Naive thymus-derived CD4-positive, alpha-beta T cell (primary cell): ENCODE measurements at regions of chr15 and their contacts with region 1.

Region 1: GRCh38 chr15:90221246-90221900 is 12.4 kb downstream of the CIB1 start:
- DNase-seq: no peak
- ATAC-seq: peak; percentile 37
- H3K4me3 ChIP-seq: no peak overlapping the region
- H3K4me3 Mint-ChIP-seq: no peak overlapping the region
- H3K27ac ChIP-seq: no peak overlapping the region
- H3K27ac Mint-ChIP-seq: no peak overlapping the region
- H3K4me1 ChIP-seq: no peaks in the 10 kb centered on the region
- H3K4me1 Mint-ChIP-seq: peaks cover 7 to 19% (median 10%) of the 10 kb centered on the region in 7 donors
- H3K27me3 ChIP-seq: no peaks in the 10 kb centered on the region
- H3K27me3 Mint-ChIP-seq: no peaks in the 10 kb centered on the region

Region 2: DNA sequence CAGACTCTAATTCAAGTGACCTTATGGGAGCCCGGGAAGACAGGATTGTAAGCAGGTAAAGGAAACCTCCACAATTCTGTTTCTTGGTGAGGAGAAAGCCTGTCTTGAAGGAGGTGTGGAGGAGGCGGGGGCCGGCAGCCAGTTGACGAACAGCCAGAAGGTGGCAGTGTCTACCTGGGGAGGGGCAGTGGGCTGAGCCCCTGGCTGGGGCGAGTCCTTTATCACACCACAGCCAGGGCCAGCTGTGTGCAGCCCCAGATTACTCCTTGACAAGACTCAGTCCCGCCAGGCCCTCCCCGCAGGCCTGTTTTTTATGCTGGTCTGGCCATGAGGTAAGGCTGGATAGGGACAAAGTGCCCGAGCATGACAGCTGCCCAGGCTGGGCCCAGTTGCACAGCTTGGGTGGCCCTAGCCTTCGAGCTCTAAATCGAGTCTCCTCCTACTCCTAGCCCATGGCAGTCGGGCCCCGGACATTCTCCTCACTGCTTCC is 78.2 kb before region 1 on chr15:
- CTCF ChIA-PET with region 1: interaction called, 3 read pairs
- POLR2A ChIA-PET with region 1: interaction called, 5 read pairs
- intact Hi-C with region 1: loop called in 1 of 2 experiments (anchors 5 kb)
- DNase-seq: peak; percentile 50 to 67 (median 58)
- ATAC-seq: peak; percentile 88
- H3K4me3 ChIP-seq: peak overlapping the region; percentile 9
- H3K4me3 Mint-ChIP-seq: peak overlapping the region; percentile 49 to 77 (median 67)
- H3K27ac ChIP-seq: no peak overlapping the region
- H3K27ac Mint-ChIP-seq: peak overlapping the region in 8 of 9 donors; percentile 37 to 92 (median 79)
- H3K4me1 ChIP-seq: peaks cover 0 to 4% of the 10 kb centered on the region in 2 donors
- H3K4me1 Mint-ChIP-seq: peaks cover 6 to 36% (median 26%) of the 10 kb centered on the region in 7 donors
- H3K27me3 ChIP-seq: no peaks in the 10 kb centered on the region
- H3K27me3 Mint-ChIP-seq: peaks cover 0 to 2% (median 0%) of the 10 kb centered on the region in 5 donors

Region 3: DNA sequence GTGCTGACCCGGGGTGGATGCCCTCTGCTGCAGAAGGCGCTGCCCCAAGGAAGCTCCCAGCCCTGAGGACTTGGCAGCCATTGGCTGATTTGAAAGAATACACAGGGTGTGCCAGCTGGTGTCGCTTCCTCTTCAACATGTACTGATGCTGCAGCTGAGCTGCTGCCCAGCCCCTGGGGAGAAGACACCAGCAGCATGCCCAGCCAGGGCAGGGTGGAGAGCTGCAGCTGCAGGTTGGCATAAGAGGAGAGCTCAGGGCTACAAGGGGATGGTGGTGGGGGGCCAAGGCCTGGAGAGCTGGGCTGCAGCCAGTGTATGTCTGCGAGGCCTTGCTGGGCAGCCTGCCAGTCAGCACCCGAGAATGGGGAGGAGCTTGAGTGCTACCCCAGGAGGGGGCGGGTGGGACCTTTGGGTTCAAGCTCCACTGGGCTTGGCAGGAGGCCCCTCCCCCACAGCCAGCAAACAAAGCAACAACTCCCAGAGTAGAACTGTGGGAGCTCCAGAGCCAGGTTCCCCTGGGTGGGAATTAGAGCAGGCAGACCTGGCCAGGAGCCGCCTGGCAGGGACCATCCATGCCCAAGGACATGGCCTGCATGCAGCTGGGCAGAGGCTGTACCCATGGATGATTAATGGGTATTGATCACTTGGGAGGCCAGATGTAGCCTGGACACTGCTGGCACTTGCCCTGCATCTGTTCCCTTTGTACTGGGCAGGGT is 29.4 kb before region 1 on chr15:
- CTCF ChIA-PET with region 1: interaction called, 10 read pairs
- POLR2A ChIA-PET with region 1: interaction called, 3 read pairs
- intact Hi-C with region 1: loop called in 1 of 2 experiments (anchors 1 kb)
- DNase-seq: peak; percentile 17 to 56 (median 53)
- ATAC-seq: peak; percentile 83
- H3K4me3 ChIP-seq: no peak overlapping the region
- H3K4me3 Mint-ChIP-seq: peak overlapping the region; percentile 78 to 88 (median 82)
- H3K27ac ChIP-seq: peak overlapping the region; percentile 9
- H3K27ac Mint-ChIP-seq: peak overlapping the region; percentile 75 to 95 (median 85)
- H3K4me1 ChIP-seq: peaks cover 7 to 21% of the 10 kb centered on the region in 2 donors
- H3K4me1 Mint-ChIP-seq: peaks cover 22 to 54% (median 31%) of the 10 kb centered on the region in 7 donors
- H3K27me3 ChIP-seq: no peaks in the 10 kb centered on the region
- H3K27me3 Mint-ChIP-seq: no peaks in the 10 kb centered on the region

Region 4: GRCh38 chr15:90201130-90201949 is 20.0 kb before region 1 on chr15 and contains the start of gene SEMA4B:
- CTCF ChIA-PET with region 1: interaction called, 3 read pairs
- POLR2A ChIA-PET with region 1: interaction called, 5 read pairs
- intact Hi-C with region 1: loop called in 1 of 2 experiments (anchors 1 kb)
- DNase-seq: peak; percentile 56 to 81 (median 70)
- ATAC-seq: peak; percentile 92
- H3K4me3 ChIP-seq: peak within 1 kb of the TSS; percentile 67
- H3K4me3 Mint-ChIP-seq: peak within 1 kb of the TSS; percentile 84 to 96 (median 89)
- H3K27ac ChIP-seq: peak within 1 kb of the TSS; percentile 85
- H3K27ac Mint-ChIP-seq: peak within 1 kb of the TSS; percentile 66 to 90 (median 82)
- H3K4me1 ChIP-seq: peaks cover 11 to 23% of the 10 kb centered on the region in 2 donors
- H3K4me1 Mint-ChIP-seq: peaks cover 21 to 36% (median 25%) of the 10 kb centered on the region in 7 donors
- H3K27me3 ChIP-seq: no peaks in the 10 kb centered on the region
- H3K27me3 Mint-ChIP-seq: peaks cover 0 to 3% (median 0%) of the 10 kb centered on the region in 5 donors
- total RNA-seq, gene SEMA4B: 15.9 to 31.0 (median 20.7) TPM

Region 5: DNA sequence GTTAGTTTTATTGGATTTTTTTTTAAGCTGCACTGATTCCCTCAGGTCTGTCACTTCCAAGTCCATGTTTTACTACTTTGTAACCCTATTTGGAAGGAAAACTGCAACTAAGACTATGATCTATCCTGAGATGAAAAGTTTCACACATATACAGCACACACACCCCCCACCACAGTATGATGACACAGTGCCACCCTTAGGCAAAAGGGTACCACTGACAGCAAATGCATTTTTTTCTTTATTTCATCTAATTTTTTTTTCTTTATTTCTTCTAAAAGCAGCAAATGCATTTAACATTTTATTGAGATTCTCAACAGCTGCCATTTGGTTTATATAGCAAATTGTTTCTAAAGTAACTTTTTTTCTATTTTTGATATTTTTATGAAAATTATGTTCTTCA is 65.3 kb after region 1 on chr15:
- CTCF ChIA-PET with region 1: no interaction called
- POLR2A ChIA-PET with region 1: no interaction called
- intact Hi-C with region 1: loop called in 1 of 2 experiments (anchors 1 kb)
- DNase-seq: peak in 7 of 9 donors; percentile 39 to 68 (median 61)
- ATAC-seq: peak; percentile 88
- H3K4me3 ChIP-seq: no peak overlapping the region
- H3K4me3 Mint-ChIP-seq: no peak overlapping the region
- H3K27ac ChIP-seq: no peak overlapping the region
- H3K27ac Mint-ChIP-seq: no peak overlapping the region
- H3K4me1 ChIP-seq: no peaks in the 10 kb centered on the region
- H3K4me1 Mint-ChIP-seq: peaks cover 0 to 5% (median 0%) of the 10 kb centered on the region in 7 donors
- H3K27me3 ChIP-seq: no peaks in the 10 kb centered on the region
- H3K27me3 Mint-ChIP-seq: peaks cover 0 to 10% (median 0%) of the 10 kb centered on the region in 5 donors

Region 6: GRCh38 chr15:90529371-90530249 is 308.2 kb after region 1 on chr15 and contains the start of gene CRTC3:
- CTCF ChIA-PET with region 1: no interaction called
- POLR2A ChIA-PET with region 1: no interaction called
- intact Hi-C with region 1: no loop called
- DNase-seq: peak; percentile 49 to 75 (median 67)
- ATAC-seq: peak; percentile 88
- H3K4me3 ChIP-seq: peak within 1 kb of the TSS; percentile 94
- H3K4me3 Mint-ChIP-seq: peak within 1 kb of the TSS; percentile 96 to 100 (median 97)
- H3K27ac ChIP-seq: peak within 1 kb of the TSS; percentile 92
- H3K27ac Mint-ChIP-seq: peak within 1 kb of the TSS; percentile 80 to 98 (median 94)
- H3K4me1 ChIP-seq: peaks cover 18% of the 10 kb centered on the region in 2 donors
- H3K4me1 Mint-ChIP-seq: peaks cover 34 to 49% (median 46%) of the 10 kb centered on the region in 7 donors
- H3K27me3 ChIP-seq: no peaks in the 10 kb centered on the region
- H3K27me3 Mint-ChIP-seq: no peaks in the 10 kb centered on the region
- total RNA-seq, gene CRTC3: 104 to 132 (median 109) TPM

Region 7: DNA sequence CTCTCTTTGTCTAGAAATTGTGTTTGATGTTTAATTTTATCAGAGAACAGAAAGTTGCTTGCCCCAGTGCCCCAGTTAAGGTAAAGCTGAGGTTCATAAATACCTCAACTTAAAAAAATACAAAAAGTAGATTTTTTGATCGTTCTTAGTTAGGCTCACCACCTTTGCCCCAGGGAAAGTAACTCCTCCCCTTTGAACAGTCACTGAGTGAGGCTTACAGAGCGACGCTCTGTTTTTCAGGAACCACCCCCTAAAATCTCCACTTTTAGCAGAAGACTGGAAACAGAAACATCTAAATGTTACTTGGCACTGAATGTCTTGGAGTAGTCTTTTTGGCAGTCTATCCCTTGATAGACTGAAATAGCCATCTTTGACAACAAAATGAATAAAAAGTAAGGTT is 520.7 kb after region 1 on chr15:
- CTCF ChIA-PET with region 1: interaction called, 10 read pairs
- POLR2A ChIA-PET with region 1: no interaction called
- intact Hi-C with region 1: no loop called
- DNase-seq: no peak
- ATAC-seq: peak; percentile 56
- H3K4me3 ChIP-seq: no peak overlapping the region
- H3K4me3 Mint-ChIP-seq: peak overlapping the region in 2 of 10 donors; percentile 10 to 19
- H3K27ac ChIP-seq: no peak overlapping the region
- H3K27ac Mint-ChIP-seq: peak overlapping the region in 2 of 9 donors; percentile 26 to 33
- H3K4me1 ChIP-seq: no peaks in the 10 kb centered on the region
- H3K4me1 Mint-ChIP-seq: peaks cover 0 to 64% (median 4%) of the 10 kb centered on the region in 7 donors
- H3K27me3 ChIP-seq: no peaks in the 10 kb centered on the region
- H3K27me3 Mint-ChIP-seq: no peaks in the 10 kb centered on the region